ENCODE measurements at regions of chr11 and their contacts with region 1.

Region 1: DNA sequence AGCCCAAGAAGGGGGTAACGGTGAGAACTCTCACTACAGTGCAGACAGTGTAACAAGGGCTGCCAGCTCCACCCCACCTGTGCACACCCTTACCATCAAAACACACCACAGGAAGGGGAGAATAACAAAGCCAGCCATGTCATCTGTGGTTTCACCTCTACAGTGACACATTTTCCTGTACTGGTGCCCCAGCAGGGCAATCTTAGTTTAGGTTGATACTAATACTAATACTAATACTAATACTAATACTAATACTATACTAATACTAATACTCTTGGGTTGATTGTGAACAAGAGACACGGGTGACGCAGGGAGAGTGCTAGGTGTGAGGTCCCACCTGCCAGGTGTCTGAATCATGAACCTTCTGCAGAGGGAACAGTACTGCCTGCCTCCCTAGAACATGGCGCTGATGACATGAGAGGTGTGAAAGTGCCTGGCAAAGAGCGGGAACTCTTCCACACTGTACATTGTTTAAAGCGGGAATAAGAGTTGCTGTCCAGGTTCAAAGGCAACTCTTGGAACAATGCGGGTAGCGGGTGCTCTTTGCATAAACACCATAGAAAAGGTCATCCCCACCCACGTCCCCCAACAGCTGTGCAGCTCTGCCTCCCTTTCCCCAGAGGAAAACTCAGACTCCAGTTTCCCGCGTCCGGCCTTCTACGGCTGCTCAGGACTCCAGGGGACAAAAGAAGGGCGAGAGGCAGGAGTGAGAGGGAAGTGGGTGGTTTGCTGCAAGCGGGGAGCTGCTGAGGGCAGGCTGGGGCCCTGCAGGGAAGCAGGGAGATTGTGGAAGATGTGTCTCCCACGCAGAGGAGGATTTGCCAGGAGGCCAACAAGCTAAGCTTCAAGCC is 25.0 kb upstream of the TMPRSS4 start:
- DNase-seq: no peak
- ATAC-seq: peak; percentile 77
- H3K4me3 Mint-ChIP-seq: peak overlapping the region; percentile 5
- H3K27ac Mint-ChIP-seq: peak overlapping the region; percentile 70
- H3K4me1 Mint-ChIP-seq: peaks cover 44% of the 10 kb centered on the region
- H3K27me3 Mint-ChIP-seq: no peaks in the 10 kb centered on the region
- CTCF ChIP-seq: no peak

Region 2: DNA sequence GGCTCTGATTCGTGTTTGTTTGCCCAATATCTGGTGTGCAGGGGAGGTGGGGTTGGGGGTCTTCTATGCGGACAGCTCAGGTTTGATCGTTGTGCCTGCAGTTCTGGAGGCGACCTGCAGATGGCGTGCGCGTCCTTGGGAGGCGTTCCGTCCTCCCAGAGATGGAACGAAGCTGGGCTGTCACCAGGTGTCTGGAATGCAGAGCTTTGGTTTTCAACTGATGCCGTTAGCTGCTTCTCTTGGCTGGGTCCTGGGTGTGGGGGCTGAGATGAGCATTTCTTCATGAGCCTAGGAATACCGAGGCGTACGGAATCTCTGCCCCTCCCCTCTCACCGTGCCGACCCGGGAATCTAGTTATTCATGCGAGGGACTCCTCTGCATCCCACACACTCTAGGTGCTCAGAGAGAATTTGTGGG is 625.6 kb before region 1 on chr11:
- CTCF ChIA-PET with region 1: interaction called, 11 read pairs
- POLR2A ChIA-PET with region 1: no interaction called
- intact Hi-C with region 1: loop called (anchors 2 kb)
- DNase-seq: peak; percentile 52
- ATAC-seq: peak; percentile 62
- H3K4me3 Mint-ChIP-seq: no peak overlapping the region
- H3K27ac Mint-ChIP-seq: no peak overlapping the region
- H3K4me1 Mint-ChIP-seq: peaks cover 7% of the 10 kb centered on the region
- H3K27me3 Mint-ChIP-seq: peaks cover 7% of the 10 kb centered on the region
- CTCF ChIP-seq: peak; percentile 23

Region 3: DNA sequence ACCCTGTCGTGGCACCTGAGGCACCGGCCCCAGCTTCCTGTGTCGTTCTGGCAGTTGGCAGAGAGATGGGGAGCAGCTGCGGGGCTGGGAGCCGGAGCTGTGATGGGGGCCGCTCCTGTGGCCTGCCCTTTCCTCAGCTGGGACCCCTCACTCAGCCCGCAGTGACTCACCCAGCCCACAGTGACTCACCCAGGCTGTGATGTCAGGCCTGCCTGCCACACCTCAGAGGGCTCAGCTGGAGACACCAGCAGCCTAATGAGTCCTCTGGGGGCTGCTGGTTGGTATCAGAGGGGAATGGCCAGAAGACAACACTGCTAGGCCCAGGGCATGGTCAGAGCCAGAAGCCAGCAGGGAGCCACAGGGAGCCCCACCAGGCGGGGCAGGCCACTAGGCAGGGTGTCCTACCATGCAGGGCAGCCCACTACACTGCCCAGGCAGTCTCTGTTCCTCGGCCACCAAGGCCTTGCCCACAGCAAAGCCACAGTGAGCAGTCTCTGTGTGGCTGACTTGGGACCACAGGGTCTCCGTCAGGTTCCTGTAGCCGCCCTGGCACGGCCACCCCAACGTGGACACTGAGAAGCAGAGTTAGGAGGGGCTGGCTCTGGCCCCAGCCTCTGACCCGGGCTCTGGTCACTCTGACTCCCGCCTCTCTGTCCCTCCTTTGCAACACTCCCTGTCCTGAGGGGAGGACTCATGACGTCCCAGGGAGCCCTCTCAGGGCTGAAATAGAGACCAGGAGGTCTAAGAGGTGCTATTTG is 223.0 kb before region 1 on chr11:
- CTCF ChIA-PET with region 1: interaction called, 15 read pairs
- POLR2A ChIA-PET with region 1: interaction called, 20 read pairs
- intact Hi-C with region 1: loop called (anchors 1 kb)
- DNase-seq: peak; percentile 79
- ATAC-seq: peak; percentile 89
- H3K4me3 Mint-ChIP-seq: peak overlapping the region; percentile 44
- H3K27ac Mint-ChIP-seq: peak overlapping the region; percentile 80
- H3K4me1 Mint-ChIP-seq: peaks cover 51% of the 10 kb centered on the region
- H3K27me3 Mint-ChIP-seq: peaks cover 23% of the 10 kb centered on the region
- CTCF ChIP-seq: no peak

Region 4: GRCh38 chr11:117900121-117900648 is 151.7 kb before region 1 on chr11:
- CTCF ChIA-PET with region 1: interaction called, 12 read pairs
- POLR2A ChIA-PET with region 1: interaction called, 4 read pairs
- intact Hi-C with region 1: loop called (anchors 1 kb)
- DNase-seq: peak; percentile 40
- ATAC-seq: peak; percentile 83
- H3K4me3 Mint-ChIP-seq: peak overlapping the region; percentile 9
- H3K27ac Mint-ChIP-seq: peak overlapping the region; percentile 87
- H3K4me1 Mint-ChIP-seq: peaks cover 26% of the 10 kb centered on the region
- H3K27me3 Mint-ChIP-seq: no peaks in the 10 kb centered on the region
- CTCF ChIP-seq: no peak

Region 5: DNA sequence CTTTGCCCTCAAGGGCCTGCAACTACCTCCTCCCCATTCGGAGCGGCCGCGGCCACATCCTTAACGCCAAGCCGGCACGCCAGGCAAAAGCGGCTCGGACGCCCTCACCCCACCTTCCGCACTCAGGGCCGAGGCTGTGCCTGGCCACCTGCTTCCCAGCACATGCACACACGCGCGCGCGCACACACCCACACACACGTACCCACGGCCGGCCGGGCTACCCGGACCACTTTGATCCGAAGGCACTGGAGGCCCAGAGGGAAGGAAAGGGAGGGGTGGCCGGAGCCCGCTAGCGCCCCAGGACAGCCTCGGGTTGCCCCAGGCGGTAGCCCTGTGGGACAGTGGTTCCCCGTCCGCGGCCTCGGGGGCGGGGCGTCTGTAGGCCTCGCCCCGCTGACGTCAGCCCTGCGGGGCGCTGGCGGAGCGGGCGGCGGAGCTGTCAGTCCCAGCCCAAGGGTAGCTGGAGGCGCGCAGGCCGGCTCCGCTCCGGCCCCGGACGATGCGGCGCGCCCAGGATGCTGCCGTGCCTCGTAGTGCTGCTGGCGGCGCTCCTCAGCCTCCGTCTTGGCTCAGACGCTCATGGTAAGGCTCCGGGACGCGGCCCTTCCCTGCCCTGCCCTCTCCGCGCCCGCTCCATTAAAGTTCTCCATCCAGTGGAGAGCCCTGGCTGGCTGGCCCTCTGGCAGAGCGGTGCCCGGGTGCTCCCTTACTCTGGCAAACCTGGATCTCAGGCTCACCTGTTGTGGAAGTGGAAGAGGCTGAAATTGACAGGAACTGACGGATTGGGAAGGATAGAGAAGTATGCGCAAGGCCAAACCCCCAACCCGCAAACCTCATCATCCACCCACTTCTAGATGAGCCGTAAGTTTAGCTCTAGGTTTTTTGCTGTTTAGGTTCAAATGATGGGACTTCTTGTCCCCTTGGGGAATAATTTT is 65.6 kb before region 1 on chr11 and contains the start of gene IL10RA:
- CTCF ChIA-PET with region 1: interaction called, 45 read pairs
- POLR2A ChIA-PET with region 1: interaction called, 111 read pairs
- intact Hi-C with region 1: loop called (anchors 1 kb)
- DNase-seq: peak; percentile 93
- ATAC-seq: peak; percentile 89
- H3K4me3 Mint-ChIP-seq: peak within 1 kb of the TSS; percentile 90
- H3K27ac Mint-ChIP-seq: peak within 1 kb of the TSS; percentile 96
- H3K4me1 Mint-ChIP-seq: peaks cover 89% of the 10 kb centered on the region
- H3K27me3 Mint-ChIP-seq: no peaks in the 10 kb centered on the region
- CTCF ChIP-seq: no peak
- total RNA-seq, gene IL10RA: 303 and 350 TPM in 2 replicates

Region 6: GRCh38 chr11:118010738-118011461 is 40.9 kb before region 1 on chr11:
- CTCF ChIA-PET with region 1: interaction called, 42 read pairs
- POLR2A ChIA-PET with region 1: interaction called, 114 read pairs
- intact Hi-C with region 1: loop called (anchors 1 kb)
- DNase-seq: peak; percentile 77
- ATAC-seq: peak; percentile 67
- H3K4me3 Mint-ChIP-seq: peak overlapping the region; percentile 66
- H3K27ac Mint-ChIP-seq: peak overlapping the region; percentile 98
- H3K4me1 Mint-ChIP-seq: peaks cover 100% of the 10 kb centered on the region
- H3K27me3 Mint-ChIP-seq: no peaks in the 10 kb centered on the region
- CTCF ChIP-seq: no peak

Region 7: DNA sequence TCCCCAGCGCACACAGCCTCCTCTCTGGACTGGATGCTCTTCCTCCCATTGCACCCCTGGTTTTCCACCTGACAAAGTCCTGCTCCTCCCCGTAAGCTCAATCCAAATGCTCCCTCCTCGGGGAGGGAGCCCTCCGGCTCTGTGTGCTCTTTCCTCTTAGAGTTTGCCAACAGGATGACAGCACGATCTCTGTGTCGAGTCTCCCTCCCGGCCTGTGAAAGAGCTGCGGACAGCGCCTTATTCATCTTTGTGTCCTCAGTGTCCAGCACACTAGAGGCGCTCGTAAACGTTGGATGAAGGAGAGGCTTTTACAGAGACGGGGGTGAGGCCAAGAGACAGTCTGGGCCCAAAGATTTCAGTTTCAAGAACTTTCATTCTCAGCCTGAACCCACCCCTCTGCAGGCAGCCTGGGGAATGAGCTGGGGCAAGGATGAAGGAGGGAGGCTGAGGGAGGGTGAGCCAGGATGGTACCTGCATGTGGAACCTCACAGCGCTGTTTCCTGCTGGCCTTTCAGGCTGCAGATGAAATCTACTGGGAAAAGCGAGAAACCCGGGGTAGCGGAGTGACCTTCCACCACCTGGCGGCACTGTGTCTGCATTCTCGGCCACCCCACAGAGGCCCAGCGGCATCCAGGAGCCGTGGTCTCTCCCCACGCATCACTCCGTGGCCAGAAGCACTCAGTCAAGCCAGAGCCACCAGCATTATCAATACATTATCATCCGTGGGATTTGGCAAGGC is 16.5 kb after region 1 on chr11:
- CTCF ChIA-PET with region 1: no interaction called
- POLR2A ChIA-PET with region 1: no interaction called
- intact Hi-C with region 1: no loop called
- DNase-seq: no peak
- ATAC-seq: no peak
- H3K4me3 Mint-ChIP-seq: no peak overlapping the region
- H3K27ac Mint-ChIP-seq: no peak overlapping the region
- H3K4me1 Mint-ChIP-seq: no peaks in the 10 kb centered on the region
- H3K27me3 Mint-ChIP-seq: peaks cover 22% of the 10 kb centered on the region
- CTCF ChIP-seq: no peak

Region 8: DNA sequence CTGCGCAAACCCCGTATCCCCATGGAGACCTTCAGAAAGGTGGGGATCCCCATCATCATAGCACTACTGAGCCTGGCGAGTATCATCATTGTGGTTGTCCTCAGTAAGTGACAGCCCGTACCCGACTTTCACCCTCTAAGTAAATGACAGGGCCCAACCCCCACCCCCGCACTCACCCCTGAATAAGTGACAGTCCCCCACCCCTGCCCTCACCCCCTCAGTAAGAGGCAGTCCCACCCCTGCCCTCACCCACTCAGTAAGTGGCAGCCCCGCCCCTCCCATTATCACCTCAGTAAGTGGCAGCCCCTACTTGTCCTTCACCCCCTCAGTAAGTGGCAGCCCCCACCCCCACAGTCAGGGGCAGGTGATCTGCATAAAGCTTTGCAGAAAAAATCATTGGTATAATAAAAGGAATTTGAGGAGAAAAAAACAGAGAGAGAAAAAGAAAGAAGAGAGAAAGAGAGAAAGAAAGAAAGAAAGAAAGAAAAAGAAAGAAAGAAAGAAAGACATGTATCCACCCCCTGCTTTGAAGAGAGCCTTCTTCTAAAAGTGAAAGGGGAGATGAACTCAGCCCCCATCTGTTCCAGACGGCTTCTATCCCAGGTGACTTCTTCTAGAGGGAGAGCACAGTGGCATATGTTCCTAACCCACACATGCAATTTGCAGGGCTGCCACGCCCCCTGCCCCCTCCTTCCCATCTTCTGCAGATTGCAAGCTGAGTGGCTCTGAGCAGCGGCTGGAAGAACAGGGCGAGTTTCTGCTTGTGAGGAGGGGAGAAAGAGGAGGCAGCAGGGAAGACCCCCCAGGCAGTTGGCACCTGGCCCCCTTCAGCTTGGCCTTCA is 47.4 kb after region 1 on chr11:
- CTCF ChIA-PET with region 1: no interaction called
- POLR2A ChIA-PET with region 1: no interaction called
- intact Hi-C with region 1: no loop called
- DNase-seq: no peak
- ATAC-seq: no peak
- H3K4me3 Mint-ChIP-seq: no peak overlapping the region
- H3K27ac Mint-ChIP-seq: no peak overlapping the region
- H3K4me1 Mint-ChIP-seq: no peaks in the 10 kb centered on the region
- H3K27me3 Mint-ChIP-seq: peaks cover 10% of the 10 kb centered on the region
- CTCF ChIP-seq: no peak

Region 9: GRCh38 chr11:118156531-118157185 is 104.8 kb after region 1 on chr11:
- CTCF ChIA-PET with region 1: no interaction called
- POLR2A ChIA-PET with region 1: no interaction called
- intact Hi-C with region 1: no loop called
- DNase-seq: no peak
- ATAC-seq: no peak
- H3K4me3 Mint-ChIP-seq: no peak overlapping the region
- H3K27ac Mint-ChIP-seq: no peak overlapping the region
- H3K4me1 Mint-ChIP-seq: peaks cover 6% of the 10 kb centered on the region
- H3K27me3 Mint-ChIP-seq: peaks cover 55% of the 10 kb centered on the region
- CTCF ChIP-seq: no peak

Measured in activated B cell treated with CpG ODN at 0.5 μM for 24 hours (primary cell).